Activated naive CD4-positive, alpha-beta T cell treated with anti-CD3 and anti-CD28 coated beads for 36 hours (primary cell): ENCODE measurements at regions of chr10 and their contacts with region 1.

Region 1: GRCh38 chr10:69087590-69088470 is at the start of gene SRGN:
- DNase-seq: peak; percentile 91
- H3K4me3 Mint-ChIP-seq: peak within 1 kb of the TSS; percentile 89
- H3K27ac Mint-ChIP-seq: peak within 1 kb of the TSS; percentile 99
- H3K4me1 Mint-ChIP-seq: peaks cover 59% of the 10 kb centered on the region
- H3K27me3 Mint-ChIP-seq: no peaks in the 10 kb centered on the region
- total RNA-seq, gene SRGN: 197 to 198 TPM

Region 2: DNA sequence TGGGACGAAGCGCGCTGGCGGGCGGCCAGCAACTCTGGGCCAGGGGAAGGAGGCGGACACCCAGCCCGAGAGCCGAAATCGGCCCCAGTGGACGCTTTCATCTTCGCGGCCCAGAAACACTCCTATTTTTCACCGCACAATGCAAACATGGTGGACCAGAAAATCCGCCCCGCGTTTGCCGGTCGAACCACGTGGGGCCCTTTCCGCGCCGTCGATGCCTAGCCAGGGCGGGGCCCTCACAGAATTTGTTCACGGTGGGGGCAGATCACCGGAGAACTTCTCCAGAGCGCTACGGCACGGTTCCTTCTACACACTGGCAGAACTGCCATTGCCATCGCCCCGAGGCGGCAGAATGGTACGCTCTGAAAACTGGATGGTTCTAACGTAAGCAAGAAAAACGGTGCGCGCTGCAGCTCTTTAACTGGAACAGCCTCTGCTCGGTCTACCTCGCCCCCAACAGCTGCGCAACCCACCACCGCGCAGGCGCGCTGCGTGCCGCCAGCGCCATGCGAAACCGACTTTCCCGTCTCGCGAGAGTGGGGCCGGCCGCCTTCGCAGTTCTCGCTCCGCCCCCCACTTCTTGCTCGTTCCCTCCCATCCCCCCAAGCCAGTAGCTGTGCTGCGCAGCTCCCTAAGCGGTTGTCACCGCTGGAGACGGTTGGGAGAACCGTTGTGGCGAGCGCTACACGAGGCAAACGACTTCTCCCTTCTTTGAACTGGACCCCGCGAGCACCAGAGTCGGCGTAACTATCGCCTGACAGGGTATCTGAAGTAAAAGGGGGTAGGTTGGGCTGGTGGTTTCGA is 756.2 kb before region 1 on chr10 and contains the start of gene HNRNPH3:
- CTCF ChIA-PET with region 1: no interaction called
- intact Hi-C with region 1: loop called (anchors 2 kb)
- DNase-seq: peak; percentile 99
- H3K4me3 Mint-ChIP-seq: peak within 1 kb of the TSS; percentile 100
- H3K27ac Mint-ChIP-seq: peak within 1 kb of the TSS; percentile 100
- H3K4me1 Mint-ChIP-seq: peaks cover 40% of the 10 kb centered on the region
- H3K27me3 Mint-ChIP-seq: no peaks in the 10 kb centered on the region
- total RNA-seq, gene HNRNPH3: 145 to 150 TPM

Region 3: GRCh38 chr10:68781613-68782574 is 305.9 kb before region 1 on chr10:
- CTCF ChIA-PET with region 1: no interaction called
- intact Hi-C with region 1: no loop called
- DNase-seq: no peak
- H3K4me3 Mint-ChIP-seq: no peak overlapping the region
- H3K27ac Mint-ChIP-seq: peak overlapping the region; percentile 3
- H3K4me1 Mint-ChIP-seq: no peaks in the 10 kb centered on the region
- H3K27me3 Mint-ChIP-seq: no peaks in the 10 kb centered on the region

Region 4: GRCh38 chr10:68997211-68997610 is 90.6 kb before region 1 on chr10:
- CTCF ChIA-PET with region 1: interaction called, 4 read pairs
- intact Hi-C with region 1: loop called (anchors 1 kb)
- DNase-seq: no peak
- H3K4me3 Mint-ChIP-seq: no peak overlapping the region
- H3K27ac Mint-ChIP-seq: peak overlapping the region; percentile 90
- H3K4me1 Mint-ChIP-seq: peaks cover 47% of the 10 kb centered on the region
- H3K27me3 Mint-ChIP-seq: no peaks in the 10 kb centered on the region

Region 5: DNA sequence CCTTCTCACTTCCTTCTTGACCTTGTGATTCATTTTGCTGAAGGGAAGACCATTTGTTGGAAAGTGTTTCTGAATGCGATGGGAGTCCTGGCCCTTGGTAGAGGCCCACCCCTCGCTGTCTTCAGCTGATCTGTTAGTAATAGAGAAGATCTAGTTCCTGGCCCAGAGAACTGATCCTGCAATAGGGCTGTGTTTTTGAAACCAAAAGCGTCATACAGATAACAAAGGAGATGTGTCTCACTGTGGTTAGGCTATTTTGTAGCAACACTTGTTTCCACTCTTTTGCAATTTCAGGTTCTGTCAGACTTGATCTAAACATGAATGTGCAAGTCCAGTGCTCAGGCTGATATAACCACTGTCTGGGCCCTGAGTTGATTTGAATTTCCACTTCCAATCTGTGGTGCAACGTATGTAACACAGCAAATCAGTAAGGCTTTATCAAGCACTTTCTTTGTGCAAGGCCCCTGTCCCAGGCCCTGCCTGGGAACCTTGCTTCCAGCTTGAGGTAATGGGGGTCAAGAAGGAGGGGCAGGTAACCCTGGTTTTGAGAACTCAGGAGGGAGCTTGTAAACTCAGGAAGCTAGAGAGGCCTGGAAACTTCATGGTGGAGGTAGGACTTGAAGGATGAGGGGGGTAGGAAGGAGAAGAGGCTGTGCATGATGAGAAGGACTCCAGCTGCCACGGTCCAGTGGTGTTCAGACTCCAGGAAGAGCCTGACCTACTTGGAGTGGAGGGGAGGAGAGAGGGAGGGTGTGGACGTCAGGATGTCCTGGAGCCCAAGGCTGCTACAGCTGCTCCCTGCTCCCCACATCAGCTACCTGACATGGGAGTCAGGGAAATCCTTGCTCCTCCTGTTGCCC is 42.2 kb before region 1 on chr10:
- CTCF ChIA-PET with region 1: interaction called, 8 read pairs
- intact Hi-C with region 1: loop called (anchors 1 kb)
- DNase-seq: peak; percentile 60
- H3K4me3 Mint-ChIP-seq: no peak overlapping the region
- H3K27ac Mint-ChIP-seq: peak overlapping the region; percentile 87
- H3K4me1 Mint-ChIP-seq: peaks cover 29% of the 10 kb centered on the region
- H3K27me3 Mint-ChIP-seq: no peaks in the 10 kb centered on the region

Region 6: GRCh38 chr10:69141304-69141703 is 53.5 kb after region 1 on chr10:
- CTCF ChIA-PET with region 1: no interaction called
- intact Hi-C with region 1: no loop called
- DNase-seq: no peak
- H3K4me3 Mint-ChIP-seq: no peak overlapping the region
- H3K27ac Mint-ChIP-seq: no peak overlapping the region
- H3K4me1 Mint-ChIP-seq: peaks cover 9% of the 10 kb centered on the region
- H3K27me3 Mint-ChIP-seq: no peaks in the 10 kb centered on the region

Region 7: GRCh38 chr10:69222157-69223027 is 134.6 kb after region 1 on chr10:
- CTCF ChIA-PET with region 1: no interaction called
- intact Hi-C with region 1: loop called (anchors 1 kb)
- DNase-seq: peak; percentile 93
- H3K4me3 Mint-ChIP-seq: peak overlapping the region; percentile 60
- H3K27ac Mint-ChIP-seq: peak overlapping the region; percentile 85
- H3K4me1 Mint-ChIP-seq: peaks cover 23% of the 10 kb centered on the region
- H3K27me3 Mint-ChIP-seq: no peaks in the 10 kb centered on the region

Region 8: GRCh38 chr10:69408318-69409175 is 320.7 kb after region 1 on chr10:
- CTCF ChIA-PET with region 1: no interaction called
- intact Hi-C with region 1: loop called (anchors 2 kb)
- DNase-seq: peak; percentile 93
- H3K4me3 Mint-ChIP-seq: peak overlapping the region; percentile 58
- H3K27ac Mint-ChIP-seq: no peak overlapping the region
- H3K4me1 Mint-ChIP-seq: peaks cover 12% of the 10 kb centered on the region
- H3K27me3 Mint-ChIP-seq: no peaks in the 10 kb centered on the region